CD8-positive, alpha-beta T cell (primary cell): ENCODE measurements at regions of chr10 and their contacts with region 1.

Region 1: GRCh38 chr10:110016039-110016438 is 8.3 kb downstream of the ADD3 start:
- DNase-seq: peak in 2 of 9 experiments; percentile 39 to 52
- ATAC-seq: no peak
- H3K4me3 ChIP-seq: no peak overlapping the region
- H3K4me3 Mint-ChIP-seq: peak overlapping the region; percentile 42
- H3K27ac ChIP-seq: no peak overlapping the region
- H3K27ac Mint-ChIP-seq: peak overlapping the region; percentile 56
- H3K4me1 ChIP-seq: peaks cover 90% of the 10 kb centered on the region
- H3K4me1 Mint-ChIP-seq: peaks cover 87% of the 10 kb centered on the region
- H3K27me3 ChIP-seq: no peaks in the 10 kb centered on the region
- H3K27me3 Mint-ChIP-seq: no peaks in the 10 kb centered on the region
- CTCF ChIP-seq: peak; percentile 16

Region 2: DNA sequence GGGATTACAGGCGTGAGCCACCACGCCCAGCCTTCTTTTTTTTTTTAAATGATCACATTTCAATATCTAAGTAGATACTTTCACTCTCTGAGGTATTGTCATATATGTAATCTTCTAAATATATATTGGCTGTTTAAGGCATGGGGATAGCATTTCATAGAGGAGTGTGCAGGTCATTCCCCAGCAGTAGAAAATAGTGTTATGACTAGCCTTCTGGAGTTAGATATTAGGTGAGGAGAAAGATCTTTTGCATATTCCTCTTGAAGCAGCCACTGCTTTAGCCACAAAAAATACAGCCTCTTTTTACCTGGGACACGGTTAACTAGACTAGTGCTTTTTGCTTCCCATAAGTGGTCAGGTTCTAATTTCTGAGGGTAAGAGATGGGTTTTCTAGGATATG is 20.6 kb after region 1 on chr10:
- CTCF ChIA-PET with region 1: no interaction called
- POLR2A ChIA-PET with region 1: no interaction called
- intact Hi-C with region 1: loop called in 1 of 2 experiments (anchors 2 kb)
- DNase-seq: no peak
- ATAC-seq: no peak
- H3K4me3 ChIP-seq: no peak overlapping the region
- H3K4me3 Mint-ChIP-seq: no peak overlapping the region
- H3K27ac ChIP-seq: no peak overlapping the region
- H3K27ac Mint-ChIP-seq: peak overlapping the region; percentile 82
- H3K4me1 ChIP-seq: peaks cover 78% of the 10 kb centered on the region
- H3K4me1 Mint-ChIP-seq: peaks cover 90% of the 10 kb centered on the region
- H3K27me3 ChIP-seq: no peaks in the 10 kb centered on the region
- H3K27me3 Mint-ChIP-seq: no peaks in the 10 kb centered on the region
- CTCF ChIP-seq: no peak